WTC11 (cell line): ENCODE measurements at regions of chr1 and their contacts with region 1.

Region 1: GRCh38 chr1:229714964-229715603 is 89.0 kb downstream of the URB2 start:
- DNase-seq: peak; percentile 56
- ATAC-seq: peak; percentile 43
- H3K4me3 Mint-ChIP-seq: no peak overlapping the region
- H3K27ac Mint-ChIP-seq: 0 out of 2 replicates have a peak overlapping the region, but pooled peaks have one; percentile 37
- H3K4me1 Mint-ChIP-seq: peaks cover 43% of the 10 kb centered on the region
- H3K27me3 Mint-ChIP-seq: no peaks in the 10 kb centered on the region
- CTCF ChIP-seq: no peak

Region 2: GRCh38 chr1:229694053-229694693 is 20.9 kb before region 1 on chr1:
- CTCF ChIA-PET with region 1: interaction called, 13 read pairs
- POLR2A ChIA-PET with region 1: no interaction called
- DNase-seq: peak; percentile 53
- ATAC-seq: peak; percentile 71
- H3K4me3 Mint-ChIP-seq: peak overlapping the region; percentile 40
- H3K27ac Mint-ChIP-seq: peak overlapping the region; percentile 99
- H3K4me1 Mint-ChIP-seq: peaks cover 56% of the 10 kb centered on the region
- H3K27me3 Mint-ChIP-seq: no peaks in the 10 kb centered on the region
- CTCF ChIP-seq: no peak